PC-9 (cell line): ENCODE measurements at regions of chr1 and their contacts with region 1.

Region 1: DNA sequence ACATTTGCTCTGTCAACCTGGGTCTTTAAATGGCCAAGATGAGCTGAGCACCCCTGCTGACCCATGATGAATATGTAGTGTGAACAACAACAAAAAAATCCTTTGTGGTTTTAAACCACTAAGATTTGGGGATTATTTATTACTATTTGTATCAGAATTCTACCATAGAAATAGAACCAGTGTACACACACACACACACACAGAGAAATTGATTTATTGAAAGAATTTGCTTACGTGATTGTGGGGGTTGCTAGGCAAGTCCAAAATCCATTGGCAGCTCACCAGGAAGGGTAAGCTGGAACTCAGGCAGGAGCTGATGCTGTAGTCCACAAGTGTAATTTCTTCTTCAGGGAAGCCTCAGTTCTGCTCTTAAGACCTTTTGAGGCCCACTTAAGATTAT is 82.5 kb upstream of the MAP1LC3C start:
- DNase-seq: no peak
- H3K4me3 ChIP-seq: no peak overlapping the region
- H3K27ac ChIP-seq: no peak overlapping the region
- H3K4me1 ChIP-seq: no peaks in the 10 kb centered on the region
- H3K27me3 ChIP-seq: peaks cover 32% of the 10 kb centered on the region
- CTCF ChIP-seq: no peak

Region 2: GRCh38 chr1:242043165-242043564 is 38.3 kb before region 1 on chr1:
- CTCF ChIA-PET with region 1: no interaction called
- POLR2A ChIA-PET with region 1: no interaction called
- intact Hi-C with region 1: no loop called
- DNase-seq: no peak
- H3K4me3 ChIP-seq: no peak overlapping the region
- H3K27ac ChIP-seq: no peak overlapping the region
- H3K4me1 ChIP-seq: no peaks in the 10 kb centered on the region
- H3K27me3 ChIP-seq: peaks cover 19% of the 10 kb centered on the region
- CTCF ChIP-seq: no peak

Region 3: GRCh38 chr1:242120432-242120831 is 39.0 kb after region 1 on chr1:
- CTCF ChIA-PET with region 1: no interaction called
- POLR2A ChIA-PET with region 1: no interaction called
- intact Hi-C with region 1: no loop called
- DNase-seq: no peak
- H3K4me3 ChIP-seq: no peak overlapping the region
- H3K27ac ChIP-seq: no peak overlapping the region
- H3K4me1 ChIP-seq: no peaks in the 10 kb centered on the region
- H3K27me3 ChIP-seq: peaks cover 13% of the 10 kb centered on the region; the same call in 1 of the 2 replicates
- CTCF ChIP-seq: no peak

Region 4: GRCh38 chr1:242205622-242206489 is 124.4 kb after region 1 on chr1:
- CTCF ChIA-PET with region 1: no interaction called
- POLR2A ChIA-PET with region 1: no interaction called
- intact Hi-C with region 1: loop called (anchors 10 kb)
- DNase-seq: no peak
- H3K4me3 ChIP-seq: no peak overlapping the region
- H3K27ac ChIP-seq: no peak overlapping the region
- H3K4me1 ChIP-seq: no peaks in the 10 kb centered on the region
- H3K27me3 ChIP-seq: peaks cover 60% of the 10 kb centered on the region
- CTCF ChIP-seq: no peak